ENCODE measurements at regions of chr1 and their contacts with region 1.

Region 1: DNA sequence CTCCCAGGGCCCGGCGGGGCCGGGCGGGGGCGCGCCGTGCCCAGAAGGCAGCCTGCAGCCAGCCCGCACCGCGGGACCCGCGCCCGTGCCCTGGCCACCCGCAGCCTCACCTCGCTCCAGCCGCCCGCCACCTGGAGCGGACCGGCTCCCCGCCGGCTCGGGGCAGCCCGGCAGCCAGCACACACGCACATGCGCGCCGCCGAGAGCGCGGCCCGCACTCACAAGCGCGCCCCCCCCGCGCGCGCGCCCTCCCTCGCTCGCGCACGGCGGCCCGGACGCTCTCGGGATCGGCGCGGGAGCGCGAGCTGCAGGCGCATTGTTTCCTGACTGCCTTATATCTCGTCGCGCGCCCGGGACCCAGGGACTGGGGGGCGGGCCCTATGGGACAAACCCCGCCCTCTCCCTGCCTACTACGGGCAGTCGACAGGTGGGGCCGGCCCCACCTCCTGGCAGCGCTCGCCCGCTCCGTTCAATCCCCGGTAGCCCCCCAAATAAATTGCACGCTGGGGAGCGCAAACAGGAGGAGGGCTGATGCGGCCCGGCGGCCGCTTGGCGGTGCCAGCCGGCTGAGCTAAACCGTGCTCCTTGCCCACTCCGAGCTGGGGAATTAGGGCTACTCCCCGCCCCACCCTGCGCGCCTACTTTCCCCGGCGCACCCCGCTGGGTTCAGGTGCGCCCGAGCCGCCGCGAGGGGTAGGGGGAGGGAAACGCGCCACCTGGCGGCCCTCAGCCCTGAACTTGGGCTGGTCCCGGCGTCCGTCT is at the start of gene MYCL:
- DNase-seq: peak; percentile 92
- H3K4me3 ChIP-seq: peak within 1 kb of the TSS; percentile 69 to 89 (median 78)
- H3K27ac ChIP-seq: no peak within 1 kb of the TSS
- H3K4me1 ChIP-seq: peaks cover 8% of the 10 kb centered on the region
- H3K27me3 ChIP-seq: peaks cover 2% of the 10 kb centered on the region
- CTCF ChIP-seq: peak; percentile 47 to 86
- total RNA-seq, gene MYCL: 3.1 to 4.5 TPM

Region 2: GRCh38 chr1:39359028-39359570 is 542.8 kb before region 1 on chr1:
- CTCF ChIA-PET with region 1: interaction called, 17 read pairs
- dilution Hi-C with region 1: no loop called
- in situ Hi-C with region 1: no loop called
- intact Hi-C with region 1: no loop called
- DNase-seq: no peak
- H3K4me3 ChIP-seq: no peak overlapping the region
- H3K27ac ChIP-seq: no peak overlapping the region
- H3K4me1 ChIP-seq: no peaks in the 10 kb centered on the region
- H3K27me3 ChIP-seq: no peaks in the 10 kb centered on the region
- CTCF ChIP-seq: no peak

Region 3: DNA sequence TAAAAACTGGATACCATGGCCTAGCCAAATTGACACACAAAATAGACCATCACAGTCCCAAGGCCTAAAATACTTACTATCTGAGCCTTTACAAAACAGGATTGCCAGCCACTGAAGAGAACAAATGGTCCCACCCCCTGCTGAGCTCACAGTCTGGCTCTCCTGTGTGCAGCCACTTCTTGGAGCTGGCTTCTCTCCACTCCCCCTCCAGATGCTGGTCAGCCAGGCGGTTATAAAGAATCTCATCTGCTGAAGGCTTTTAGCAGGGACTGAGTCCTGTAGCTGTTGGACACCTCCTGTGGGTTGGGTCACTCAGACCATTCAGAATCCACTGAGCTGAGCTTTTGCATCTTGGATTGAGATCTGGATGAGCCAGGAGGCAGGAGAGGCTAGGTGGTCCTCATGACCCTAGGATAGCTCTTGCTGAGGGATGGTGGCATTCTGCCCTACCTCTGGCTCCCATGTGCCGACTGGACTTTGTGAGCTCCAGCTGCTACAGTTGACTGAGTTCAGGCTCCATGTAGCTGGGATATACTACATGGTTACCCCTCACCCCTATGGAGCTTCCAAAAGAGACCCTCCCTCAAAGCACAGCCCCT is 146.9 kb before region 1 on chr1:
- CTCF ChIA-PET with region 1: no interaction called
- dilution Hi-C with region 1: no loop called
- in situ Hi-C with region 1: no loop called
- intact Hi-C with region 1: no loop called
- DNase-seq: no peak
- H3K4me3 ChIP-seq: no peak overlapping the region
- H3K27ac ChIP-seq: no peak overlapping the region
- H3K4me1 ChIP-seq: no peaks in the 10 kb centered on the region
- H3K27me3 ChIP-seq: no peaks in the 10 kb centered on the region
- CTCF ChIP-seq: no peak

Region 4: DNA sequence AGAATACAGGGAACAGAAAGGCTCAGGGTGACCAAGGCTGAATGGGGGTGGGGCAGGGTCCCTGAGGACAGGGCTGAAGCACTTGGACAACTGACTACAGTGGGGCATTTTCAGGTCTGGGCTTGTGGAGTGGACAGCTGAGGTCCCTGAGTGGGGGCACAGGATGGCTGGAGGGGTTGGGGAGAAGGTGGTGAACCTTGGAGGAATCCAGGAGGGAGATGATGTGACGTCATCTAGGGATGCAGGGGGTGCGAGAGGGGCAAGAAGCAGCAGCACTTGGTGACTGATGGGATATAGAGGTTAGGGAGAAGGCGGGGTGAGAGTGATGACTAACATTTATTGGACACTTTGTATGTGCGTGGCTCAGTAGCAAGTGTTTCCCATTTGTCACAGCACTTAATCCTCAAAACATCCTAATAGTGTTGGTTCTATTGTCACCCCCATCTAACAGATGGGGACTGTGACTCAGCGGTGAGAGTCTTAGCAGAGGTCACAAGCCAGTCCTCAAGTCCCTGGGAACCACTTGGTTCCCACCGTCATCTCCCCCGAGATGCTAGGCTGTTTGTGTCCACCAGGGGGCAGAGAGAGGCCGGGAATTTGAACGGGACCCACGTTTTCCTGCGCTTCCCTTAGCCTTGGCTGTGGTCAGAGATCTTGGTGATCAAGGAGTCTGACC is 85.3 kb before region 1 on chr1:
- CTCF ChIA-PET with region 1: interaction called, 4 read pairs
- dilution Hi-C with region 1: no loop called
- in situ Hi-C with region 1: loop called (anchors 10 to 25 kb)
- intact Hi-C with region 1: loop called (anchors 1 kb)
- DNase-seq: peak; percentile 60
- H3K4me3 ChIP-seq: no peak overlapping the region
- H3K27ac ChIP-seq: no peak overlapping the region
- H3K4me1 ChIP-seq: no peaks in the 10 kb centered on the region
- H3K27me3 ChIP-seq: no peaks in the 10 kb centered on the region
- CTCF ChIP-seq: peak; percentile 75 to 85

Region 5: DNA sequence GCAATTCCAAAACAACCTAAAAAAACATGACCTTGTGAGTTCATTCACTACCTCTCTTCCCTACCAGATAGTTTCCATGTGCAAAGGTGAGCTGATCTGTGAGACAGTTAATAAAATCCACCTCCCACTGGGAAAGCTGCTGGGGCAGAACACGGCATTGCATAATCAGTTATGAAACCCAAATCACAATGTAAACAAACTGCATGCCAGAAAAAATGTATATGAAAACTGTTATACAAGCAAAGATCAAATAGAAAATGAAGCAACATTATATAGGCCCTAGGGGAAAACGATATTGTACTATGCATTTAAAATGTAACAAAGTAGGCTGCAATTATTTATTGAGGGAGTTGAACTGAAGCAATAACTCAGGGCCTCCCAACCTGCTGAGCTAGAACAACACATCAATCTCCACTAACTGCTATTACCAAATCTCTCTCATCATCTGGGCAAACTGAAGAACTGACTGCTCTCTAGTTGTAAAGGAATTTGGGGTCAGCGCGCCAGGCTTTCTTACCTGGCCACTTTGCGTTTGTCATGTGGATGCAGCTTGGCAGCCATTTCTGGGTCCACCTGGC is 49.6 kb before region 1 on chr1:
- CTCF ChIA-PET with region 1: interaction called, 6 read pairs
- dilution Hi-C with region 1: no loop called
- in situ Hi-C with region 1: no loop called
- intact Hi-C with region 1: loop called (anchors 5 kb)
- DNase-seq: peak; percentile 36
- H3K4me3 ChIP-seq: no peak overlapping the region
- H3K27ac ChIP-seq: no peak overlapping the region
- H3K4me1 ChIP-seq: peaks cover 20% of the 10 kb centered on the region
- H3K27me3 ChIP-seq: no peaks in the 10 kb centered on the region
- CTCF ChIP-seq: no peak

Region 6: GRCh38 chr1:39882152-39882551 is 19.7 kb before region 1 on chr1:
- CTCF ChIA-PET with region 1: interaction called, 3 read pairs
- dilution Hi-C with region 1: no loop called
- in situ Hi-C with region 1: no loop called
- intact Hi-C with region 1: loop called (anchors 1 kb)
- DNase-seq: no peak
- H3K4me3 ChIP-seq: peak overlapping the region; percentile 99 to 100 (median 99)
- H3K27ac ChIP-seq: no peak overlapping the region
- H3K4me1 ChIP-seq: peaks cover 5% of the 10 kb centered on the region
- H3K27me3 ChIP-seq: no peaks in the 10 kb centered on the region
- CTCF ChIP-seq: no peak

Region 7: DNA sequence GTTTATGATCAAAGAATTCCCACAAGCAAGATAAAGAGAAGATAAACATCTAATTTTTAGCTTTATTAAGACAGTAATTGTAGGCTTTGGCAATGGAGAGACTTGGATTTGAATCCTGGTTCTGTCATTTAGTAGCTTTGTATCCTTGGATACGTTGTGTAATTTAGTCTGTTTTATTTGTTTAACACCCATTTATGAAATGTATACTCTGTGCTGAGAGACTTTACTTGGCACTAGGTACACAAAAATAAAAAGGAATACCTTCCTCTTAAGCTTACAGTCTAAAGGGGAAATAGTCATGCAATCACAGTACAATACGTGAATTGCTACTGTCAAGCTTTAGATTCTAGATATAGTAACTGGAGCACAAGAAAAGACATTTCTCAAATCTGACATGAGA is 380.0 kb after region 1 on chr1:
- CTCF ChIA-PET with region 1: no interaction called
- dilution Hi-C with region 1: no loop called
- in situ Hi-C with region 1: no loop called
- intact Hi-C with region 1: no loop called
- DNase-seq: no peak
- H3K4me3 ChIP-seq: no peak overlapping the region
- H3K27ac ChIP-seq: no peak overlapping the region
- H3K4me1 ChIP-seq: no peaks in the 10 kb centered on the region
- H3K27me3 ChIP-seq: no peaks in the 10 kb centered on the region
- CTCF ChIP-seq: no peak

Measured in mammary epithelial cell (primary cell).